Activated T-helper 2 cell treated with anti-CD3 and anti-CD28 coated beads, Interferon-gamma antibody, Interleukin-2, Interleukin-4, amounts not matched to agents 10 μg/mL and 5 μg/mL and 100 μg/mL, durations not matched to agents 14 hours and 24 hours and 36 hours (primary cell): ENCODE measurements at regions of chr10 and their contacts with region 1.

Region 1: GRCh38 chr10:99620713-99621453 is 644 bp upstream of the SLC25A28 start:
- DNase-seq: peak; percentile 69
- H3K4me3 Mint-ChIP-seq: peak overlapping the region; percentile 90
- H3K27ac Mint-ChIP-seq: peak overlapping the region; percentile 90
- H3K4me1 Mint-ChIP-seq: peaks cover 45% of the 10 kb centered on the region
- H3K27me3 Mint-ChIP-seq: no peaks in the 10 kb centered on the region

Region 2: GRCh38 chr10:98134431-98135221 is 1486.3 kb before region 1 on chr10 and contains the start of gene R3HCC1L:
- intact Hi-C with region 1: loop called (anchors 5 kb)
- DNase-seq: peak; percentile 90
- H3K4me3 Mint-ChIP-seq: peak within 1 kb of the TSS; percentile 89
- H3K27ac Mint-ChIP-seq: peak within 1 kb of the TSS; percentile 80
- H3K4me1 Mint-ChIP-seq: peaks cover 36% of the 10 kb centered on the region
- H3K27me3 Mint-ChIP-seq: no peaks in the 10 kb centered on the region
- total RNA-seq, gene R3HCC1L: 17.9 and 18.4 TPM in 2 replicates

Region 3: DNA sequence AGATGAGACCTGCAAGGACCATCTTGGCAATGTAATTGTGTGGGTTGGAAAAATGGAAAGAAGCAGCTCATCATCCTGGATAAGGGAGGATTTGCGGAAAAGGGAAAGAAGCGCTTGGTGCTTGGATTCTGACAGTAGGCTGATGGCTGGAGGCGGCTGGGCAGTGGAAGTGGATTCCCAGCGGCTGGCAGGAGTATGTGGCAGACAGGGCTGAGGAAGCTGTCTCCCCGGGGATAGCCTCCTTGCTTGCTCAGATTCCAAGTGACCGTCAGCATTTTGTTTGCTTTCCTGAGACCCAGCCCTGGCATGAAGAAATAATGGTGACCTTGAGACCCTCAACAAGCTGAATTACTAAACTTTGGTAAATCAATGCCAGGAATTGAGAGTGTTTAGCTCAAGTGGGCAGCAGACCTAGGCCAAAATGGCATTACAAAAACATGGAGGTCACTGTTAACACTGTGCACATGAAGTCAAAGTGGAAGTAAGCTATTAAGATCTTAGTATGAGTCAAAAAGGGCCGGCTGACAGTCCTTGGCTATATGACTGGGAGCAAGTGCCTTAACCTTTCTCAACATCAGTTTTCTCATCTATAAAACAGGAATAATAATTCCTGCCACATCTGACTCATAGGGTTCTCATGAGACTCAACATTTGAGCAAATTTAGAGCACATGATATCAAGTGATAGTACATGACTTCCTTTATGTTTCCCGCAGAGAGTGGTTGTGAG is 21.9 kb before region 1 on chr10:
- intact Hi-C with region 1: no loop called
- DNase-seq: no peak
- H3K4me3 Mint-ChIP-seq: no peak overlapping the region
- H3K27ac Mint-ChIP-seq: no peak overlapping the region
- H3K4me1 Mint-ChIP-seq: no peaks in the 10 kb centered on the region
- H3K27me3 Mint-ChIP-seq: peaks cover 7% of the 10 kb centered on the region

Region 4: DNA sequence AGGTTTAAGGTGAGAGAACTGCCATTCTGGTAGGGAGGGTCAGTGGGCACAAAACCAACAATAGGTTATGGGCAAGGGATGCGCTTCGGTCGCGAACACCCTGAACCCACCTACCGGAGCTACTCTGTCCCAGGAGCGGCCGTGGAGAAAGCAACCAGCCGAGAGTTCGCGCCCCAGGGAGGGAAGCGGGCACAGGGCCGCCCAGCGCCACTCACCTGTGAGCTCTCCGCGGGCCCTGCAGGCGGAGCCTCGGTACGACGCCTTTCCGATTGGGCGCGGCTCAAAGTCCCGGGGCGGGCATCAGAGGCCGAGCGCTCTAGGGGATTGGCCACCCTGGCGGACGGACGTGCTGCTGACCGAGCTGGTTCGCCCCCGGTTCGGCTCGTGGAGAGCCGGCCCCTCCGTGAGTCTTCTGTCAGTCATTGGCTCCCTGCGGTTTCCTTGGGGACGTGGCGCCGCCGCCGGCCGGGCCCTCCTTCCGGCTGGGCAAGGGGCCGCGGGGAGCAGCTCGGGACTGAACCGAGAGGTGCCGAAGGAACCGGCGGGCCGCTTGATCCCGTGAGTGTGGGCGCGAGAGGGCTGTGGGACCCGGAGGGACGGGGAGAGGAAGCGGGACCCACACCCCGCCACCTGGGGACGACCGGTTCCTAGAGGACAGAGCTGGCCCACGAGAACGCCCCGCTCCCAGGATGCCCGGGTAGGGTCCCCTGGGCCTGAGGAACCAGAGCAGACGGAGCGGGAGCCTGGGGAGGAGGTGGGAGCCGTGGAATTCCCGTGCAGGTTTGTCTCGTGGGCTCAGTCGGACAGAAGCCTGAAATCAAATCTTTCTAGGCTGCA is 38.4 kb after region 1 on chr10 and contains the start of gene ENTPD7:
- intact Hi-C with region 1: loop called (anchors 1 kb)
- DNase-seq: peak; percentile 90
- H3K4me3 Mint-ChIP-seq: peak within 1 kb of the TSS; percentile 96
- H3K27ac Mint-ChIP-seq: peak within 1 kb of the TSS; percentile 91
- H3K4me1 Mint-ChIP-seq: peaks cover 18% of the 10 kb centered on the region
- H3K27me3 Mint-ChIP-seq: peaks cover 19% of the 10 kb centered on the region
- total RNA-seq, gene ENTPD7: 7.5 and 8.2 TPM in 2 replicates

Region 5: GRCh38 chr10:99732033-99732912 is 111.4 kb after region 1 on chr10 and contains the starts of genes COX15 and CUTC:
- intact Hi-C with region 1: loop called (anchors 1 kb)
- DNase-seq: peak; percentile 94
- H3K4me3 Mint-ChIP-seq: peak within 1 kb of the TSS; percentile 99
- H3K27ac Mint-ChIP-seq: peak within 1 kb of the TSS; percentile 99
- H3K4me1 Mint-ChIP-seq: peaks cover 24% of the 10 kb centered on the region
- H3K27me3 Mint-ChIP-seq: no peaks in the 10 kb centered on the region
- total RNA-seq, gene COX15: 33.9 and 35.2 TPM in 2 replicates
- total RNA-seq, gene CUTC: 34.4 and 35.5 TPM in 2 replicates

Region 6: DNA sequence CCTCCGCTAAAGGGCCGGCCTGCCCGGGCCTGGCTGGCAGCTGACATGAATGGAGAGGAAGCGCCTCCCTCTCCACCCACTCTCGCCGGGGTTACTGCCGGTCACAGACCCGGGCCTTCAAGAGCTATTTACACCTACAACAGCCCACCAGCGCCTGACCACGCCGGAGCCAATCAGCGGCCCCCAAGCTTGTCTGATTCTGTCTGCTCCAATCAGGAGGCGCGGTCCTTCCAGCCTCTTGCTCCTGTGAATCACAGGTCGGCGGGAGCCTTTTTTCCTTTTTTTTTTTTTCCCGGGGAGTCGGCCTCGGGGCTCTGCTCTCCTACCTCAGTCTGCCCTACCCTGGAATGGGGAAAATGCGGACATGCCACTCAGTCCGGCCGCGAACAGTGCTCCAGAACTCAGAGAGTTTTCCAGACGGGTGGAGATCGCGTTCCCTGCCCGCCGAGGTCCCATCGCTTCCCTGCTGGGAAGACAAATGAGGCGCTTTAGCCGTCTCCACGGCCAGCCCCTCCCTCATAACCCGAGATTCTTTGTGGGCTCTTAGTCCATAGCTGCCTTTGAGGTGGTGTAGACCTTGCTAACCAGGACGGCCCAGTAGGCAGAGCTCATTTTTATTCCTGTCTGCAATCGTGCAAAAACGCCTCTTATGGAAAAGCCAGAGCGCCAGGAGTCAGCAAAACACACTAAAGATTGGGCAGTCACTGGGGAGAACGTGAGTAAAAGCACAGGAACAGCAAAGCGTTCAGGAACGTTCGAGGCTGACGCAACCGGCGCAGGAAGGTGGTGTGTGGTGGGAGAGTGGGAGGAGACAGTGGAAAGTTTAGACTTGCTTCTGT is 752.6 kb after region 1 on chr10:
- intact Hi-C with region 1: loop called (anchors 5 kb)
- DNase-seq: peak; percentile 86
- H3K4me3 Mint-ChIP-seq: no peak overlapping the region
- H3K27ac Mint-ChIP-seq: no peak overlapping the region
- H3K4me1 Mint-ChIP-seq: peaks cover 40% of the 10 kb centered on the region
- H3K27me3 Mint-ChIP-seq: no peaks in the 10 kb centered on the region